Naive thymus-derived CD4-positive, alpha-beta T cell (primary cell): ENCODE measurements at regions of chr17 and their contacts with region 1.

Region 1: DNA sequence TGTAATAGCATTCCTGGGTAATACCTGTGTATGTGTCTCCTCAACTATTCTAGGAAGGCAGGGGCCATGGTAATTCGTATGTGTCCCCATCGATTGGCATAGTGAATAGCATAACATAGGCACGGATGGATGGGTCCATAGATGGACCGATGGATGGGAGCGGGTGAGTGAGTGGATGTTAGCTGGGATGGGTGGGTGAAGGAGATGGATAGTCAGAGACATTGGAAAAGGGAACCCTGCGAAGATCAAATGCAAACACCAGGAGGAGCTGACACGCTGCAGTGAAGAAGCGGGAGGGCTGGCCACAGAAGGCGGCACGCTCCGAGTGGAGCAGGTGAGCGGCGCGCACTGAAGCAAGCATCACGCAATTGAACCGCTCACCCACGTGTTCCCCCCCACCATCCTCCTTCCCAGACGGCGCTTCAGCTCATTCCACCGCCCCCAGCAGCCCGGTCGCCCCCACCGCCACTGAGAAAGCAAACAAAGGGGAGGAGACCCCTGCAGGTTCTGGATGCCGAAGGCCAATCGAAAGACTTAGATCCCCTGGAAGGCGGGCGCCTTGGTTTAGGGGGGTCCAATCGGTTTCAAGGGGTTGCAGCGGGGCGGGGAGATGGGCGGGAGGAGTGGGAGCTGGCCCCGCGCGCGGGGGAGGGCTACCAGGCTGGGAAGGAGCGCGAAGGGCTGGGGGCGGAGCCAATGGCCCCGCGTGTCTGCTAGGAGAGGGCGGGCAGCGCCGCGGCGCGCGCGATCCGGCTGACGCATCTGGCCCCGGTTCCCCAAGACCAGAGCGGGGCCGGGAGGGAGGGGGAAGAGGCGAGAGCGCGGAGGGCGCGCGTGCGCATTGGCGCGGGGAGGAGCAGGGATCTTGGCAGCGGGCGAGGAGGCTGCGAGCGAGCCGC is at the start of gene ARRB2:
- DNase-seq: peak; percentile 97 to 99 (median 99)
- ATAC-seq: peak; percentile 91
- H3K4me3 ChIP-seq: peak within 1 kb of the TSS; percentile 89
- H3K4me3 Mint-ChIP-seq: peak within 1 kb of the TSS; percentile 89 to 99 (median 97)
- H3K27ac ChIP-seq: peak within 1 kb of the TSS; percentile 84
- H3K27ac Mint-ChIP-seq: peak within 1 kb of the TSS; percentile 69 to 98 (median 92)
- H3K4me1 ChIP-seq: peaks cover 28 to 34% of the 10 kb centered on the region in 2 donors
- H3K4me1 Mint-ChIP-seq: peaks cover 21 to 63% (median 49%) of the 10 kb centered on the region in 7 donors
- H3K27me3 ChIP-seq: no peaks in the 10 kb centered on the region
- H3K27me3 Mint-ChIP-seq: no peaks in the 10 kb centered on the region
- total RNA-seq, gene ARRB2: 270 to 601 (median 377) TPM

Region 2: DNA sequence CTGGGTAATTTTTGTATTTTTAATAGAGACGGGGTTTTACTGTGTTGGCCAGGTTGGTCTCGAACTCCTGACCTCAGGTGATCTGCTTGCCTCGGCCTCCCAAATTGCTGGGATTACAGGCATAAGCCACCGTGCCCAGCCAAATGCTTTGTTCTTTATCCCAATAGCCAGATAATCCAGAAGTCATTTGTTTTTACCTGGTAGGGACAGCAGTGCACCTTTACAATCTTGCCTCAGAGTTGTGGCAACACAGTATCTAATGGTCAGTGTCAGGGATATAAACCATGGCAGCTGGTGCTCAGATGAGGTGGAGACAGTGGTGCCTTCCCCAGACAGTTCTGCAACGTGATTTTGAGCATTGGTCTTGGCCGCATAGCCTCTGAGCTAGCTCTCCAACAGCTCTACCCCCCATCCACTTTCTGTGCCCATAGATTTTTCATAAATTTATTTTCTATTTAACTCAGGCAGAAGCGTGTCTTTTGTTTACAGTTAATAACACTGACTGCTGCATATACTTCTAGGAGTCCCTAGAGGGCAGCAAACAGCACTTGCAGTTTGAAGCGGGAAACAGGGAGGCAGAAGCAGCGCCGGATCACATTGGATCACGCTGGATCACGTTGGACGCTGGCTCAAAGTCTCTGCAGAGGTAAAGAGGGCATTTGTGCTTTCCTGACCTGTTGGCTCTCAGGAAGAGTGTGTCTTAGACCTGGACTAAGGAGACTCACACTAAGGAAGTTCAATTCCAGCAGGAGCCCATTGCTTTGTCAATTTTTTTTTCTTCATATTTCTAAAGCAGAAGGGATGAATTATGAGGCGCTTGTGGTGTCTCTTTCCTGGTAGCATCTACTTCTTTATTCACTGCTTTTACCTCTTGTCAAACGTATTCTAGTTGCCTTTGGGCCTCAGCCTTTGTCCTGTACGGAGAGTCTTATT is 144.6 kb before region 1 on chr17:
- CTCF ChIA-PET with region 1: no interaction called
- POLR2A ChIA-PET with region 1: interaction called, 4 read pairs
- intact Hi-C with region 1: loop called (anchors 5 to 10 kb)
- DNase-seq: peak in 8 of 9 donors; percentile 29 to 60 (median 50)
- ATAC-seq: peak; percentile 90
- H3K4me3 ChIP-seq: no peak overlapping the region
- H3K4me3 Mint-ChIP-seq: peak overlapping the region in 9 of 10 donors; percentile 44 to 77 (median 70)
- H3K27ac ChIP-seq: no peak overlapping the region
- H3K27ac Mint-ChIP-seq: peak overlapping the region in 3 of 9 donors; percentile 15 to 41 (median 21)
- H3K4me1 ChIP-seq: peaks cover 7 to 11% of the 10 kb centered on the region in 2 donors
- H3K4me1 Mint-ChIP-seq: peaks cover 15 to 40% (median 33%) of the 10 kb centered on the region in 7 donors
- H3K27me3 ChIP-seq: no peaks in the 10 kb centered on the region
- H3K27me3 Mint-ChIP-seq: peaks cover 0 to 17% (median 0%) of the 10 kb centered on the region in 5 donors

Region 3: DNA sequence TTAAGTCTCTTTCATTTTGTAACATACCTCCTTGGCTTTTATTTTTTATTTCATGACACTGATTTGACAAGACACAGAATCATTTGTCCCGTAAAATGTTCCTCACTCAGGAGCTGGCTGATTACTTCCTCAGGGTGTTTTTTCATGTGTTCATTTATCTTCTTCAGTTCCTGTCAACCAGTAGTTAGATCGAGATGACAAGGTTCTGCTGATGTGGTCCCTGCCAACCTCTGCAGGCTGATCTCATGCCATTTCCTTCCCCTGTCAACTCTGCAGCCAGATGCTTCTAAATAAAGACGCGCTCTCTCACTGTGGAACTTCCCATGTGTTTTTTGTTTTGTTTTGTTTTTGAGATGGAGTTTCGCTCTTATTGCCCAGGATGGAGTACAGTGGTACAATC is 37.8 kb after region 1 on chr17:
- CTCF ChIA-PET with region 1: interaction called, 3 read pairs
- POLR2A ChIA-PET with region 1: interaction called, 3 read pairs
- intact Hi-C with region 1: loop called (anchors 5 kb)
- DNase-seq: peak in 7 of 9 donors; percentile 28 to 67 (median 58)
- ATAC-seq: peak; percentile 95
- H3K4me3 ChIP-seq: no peak overlapping the region
- H3K4me3 Mint-ChIP-seq: peak overlapping the region; percentile 66 to 77 (median 72)
- H3K27ac ChIP-seq: no peak overlapping the region
- H3K27ac Mint-ChIP-seq: peak overlapping the region; percentile 61 to 90 (median 77)
- H3K4me1 ChIP-seq: peaks cover 5 to 7% of the 10 kb centered on the region in 2 donors
- H3K4me1 Mint-ChIP-seq: peaks cover 13 to 26% (median 21%) of the 10 kb centered on the region in 7 donors
- H3K27me3 ChIP-seq: no peaks in the 10 kb centered on the region
- H3K27me3 Mint-ChIP-seq: peaks cover 0 to 40% (median 0%) of the 10 kb centered on the region in 5 donors

Region 4: GRCh38 chr17:4806777-4807604 is 96.9 kb after region 1 on chr17 and contains the start of gene PLD2:
- CTCF ChIA-PET with region 1: no interaction called
- POLR2A ChIA-PET with region 1: interaction called, 13 read pairs
- intact Hi-C with region 1: loop called in 1 of 2 experiments (anchors 1 kb)
- DNase-seq: peak; percentile 71 to 95 (median 80)
- ATAC-seq: peak; percentile 100
- H3K4me3 ChIP-seq: peak within 1 kb of the TSS; percentile 47
- H3K4me3 Mint-ChIP-seq: peak within 1 kb of the TSS; percentile 71 to 88 (median 80)
- H3K27ac ChIP-seq: peak within 1 kb of the TSS; percentile 79
- H3K27ac Mint-ChIP-seq: peak within 1 kb of the TSS in 7 of 9 donors; percentile 48 to 78 (median 62)
- H3K4me1 ChIP-seq: peaks cover 0 to 5% of the 10 kb centered on the region in 2 donors
- H3K4me1 Mint-ChIP-seq: peaks cover 7 to 23% (median 19%) of the 10 kb centered on the region in 7 donors
- H3K27me3 ChIP-seq: no peaks in the 10 kb centered on the region
- H3K27me3 Mint-ChIP-seq: peaks cover 0 to 7% (median 0%) of the 10 kb centered on the region in 5 donors
- total RNA-seq, gene PLD2: 22.9 to 42.7 (median 26.8) TPM

Region 5: DNA sequence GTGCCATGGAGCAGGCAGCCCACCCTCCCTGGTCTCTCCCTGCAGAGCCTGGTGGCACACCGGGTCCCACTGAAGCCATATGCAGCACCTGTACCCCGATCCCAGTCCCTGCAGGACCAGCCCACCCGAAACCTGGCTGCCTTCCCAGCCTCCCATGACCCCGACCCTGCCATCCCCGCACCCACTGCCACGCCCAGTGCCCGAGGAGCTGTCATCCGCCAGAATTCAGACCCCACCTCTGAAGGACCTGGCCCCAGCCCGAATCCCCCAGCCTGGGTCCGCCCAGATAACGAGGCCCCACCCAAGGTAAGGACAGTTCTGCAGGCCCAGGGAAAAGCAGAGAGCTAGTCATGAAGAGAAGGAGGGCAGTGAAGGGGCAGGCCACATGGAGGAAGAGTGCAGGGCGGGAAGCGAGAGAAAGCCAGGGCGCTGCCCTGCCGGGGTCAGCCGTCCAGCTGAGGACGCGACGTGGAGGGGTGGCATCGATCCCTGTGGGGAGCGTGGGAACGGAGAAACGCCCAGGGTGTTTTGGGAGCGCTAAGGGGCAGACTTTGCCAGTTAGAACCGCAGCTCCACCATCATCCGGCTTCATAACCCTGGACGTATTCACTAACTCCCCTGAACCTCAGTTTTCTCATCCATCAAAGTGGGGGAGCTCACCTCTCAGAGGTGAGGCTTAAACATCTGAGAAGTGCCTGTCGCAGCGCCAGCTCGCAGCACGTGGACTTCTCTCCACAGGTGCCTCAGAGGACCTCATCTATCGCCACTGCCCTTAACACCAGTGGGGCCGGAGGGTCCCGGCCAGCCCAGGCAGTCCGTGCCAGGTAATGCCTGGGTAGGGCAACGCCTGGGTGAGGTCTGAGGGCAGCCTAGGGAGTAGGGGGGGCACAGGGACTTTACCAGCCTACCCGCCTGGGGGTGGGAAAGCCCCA is 181.6 kb after region 1 on chr17:
- CTCF ChIA-PET with region 1: interaction called, 6 read pairs
- POLR2A ChIA-PET with region 1: no interaction called
- intact Hi-C with region 1: loop called (anchors 1 kb)
- DNase-seq: no peak
- ATAC-seq: no peak
- H3K4me3 ChIP-seq: no peak overlapping the region
- H3K4me3 Mint-ChIP-seq: no peak overlapping the region
- H3K27ac ChIP-seq: no peak overlapping the region
- H3K27ac Mint-ChIP-seq: no peak overlapping the region
- H3K4me1 ChIP-seq: no peaks in the 10 kb centered on the region
- H3K4me1 Mint-ChIP-seq: peaks cover 0 to 5% (median 2%) of the 10 kb centered on the region in 7 donors
- H3K27me3 ChIP-seq: no peaks in the 10 kb centered on the region
- H3K27me3 Mint-ChIP-seq: no peaks in the 10 kb centered on the region

Region 6: GRCh38 chr17:4948931-4949320 is 238.9 kb after region 1 on chr17:
- CTCF ChIA-PET with region 1: no interaction called
- POLR2A ChIA-PET with region 1: interaction called, 6 read pairs
- intact Hi-C with region 1: loop called (anchors 1 kb)
- DNase-seq: peak in 7 of 9 donors; percentile 69 to 84 (median 79)
- ATAC-seq: peak; percentile 58
- H3K4me3 ChIP-seq: peak overlapping the region; percentile 98
- H3K4me3 Mint-ChIP-seq: peak overlapping the region; percentile 92 to 100 (median 98)
- H3K27ac ChIP-seq: peak overlapping the region; percentile 89
- H3K27ac Mint-ChIP-seq: peak overlapping the region; percentile 83 to 100 (median 96)
- H3K4me1 ChIP-seq: peaks cover 27 to 35% of the 10 kb centered on the region in 2 donors
- H3K4me1 Mint-ChIP-seq: peaks cover 37 to 50% (median 43%) of the 10 kb centered on the region in 7 donors
- H3K27me3 ChIP-seq: no peaks in the 10 kb centered on the region
- H3K27me3 Mint-ChIP-seq: peaks cover 0 to 2% (median 0%) of the 10 kb centered on the region in 5 donors

Region 7: DNA sequence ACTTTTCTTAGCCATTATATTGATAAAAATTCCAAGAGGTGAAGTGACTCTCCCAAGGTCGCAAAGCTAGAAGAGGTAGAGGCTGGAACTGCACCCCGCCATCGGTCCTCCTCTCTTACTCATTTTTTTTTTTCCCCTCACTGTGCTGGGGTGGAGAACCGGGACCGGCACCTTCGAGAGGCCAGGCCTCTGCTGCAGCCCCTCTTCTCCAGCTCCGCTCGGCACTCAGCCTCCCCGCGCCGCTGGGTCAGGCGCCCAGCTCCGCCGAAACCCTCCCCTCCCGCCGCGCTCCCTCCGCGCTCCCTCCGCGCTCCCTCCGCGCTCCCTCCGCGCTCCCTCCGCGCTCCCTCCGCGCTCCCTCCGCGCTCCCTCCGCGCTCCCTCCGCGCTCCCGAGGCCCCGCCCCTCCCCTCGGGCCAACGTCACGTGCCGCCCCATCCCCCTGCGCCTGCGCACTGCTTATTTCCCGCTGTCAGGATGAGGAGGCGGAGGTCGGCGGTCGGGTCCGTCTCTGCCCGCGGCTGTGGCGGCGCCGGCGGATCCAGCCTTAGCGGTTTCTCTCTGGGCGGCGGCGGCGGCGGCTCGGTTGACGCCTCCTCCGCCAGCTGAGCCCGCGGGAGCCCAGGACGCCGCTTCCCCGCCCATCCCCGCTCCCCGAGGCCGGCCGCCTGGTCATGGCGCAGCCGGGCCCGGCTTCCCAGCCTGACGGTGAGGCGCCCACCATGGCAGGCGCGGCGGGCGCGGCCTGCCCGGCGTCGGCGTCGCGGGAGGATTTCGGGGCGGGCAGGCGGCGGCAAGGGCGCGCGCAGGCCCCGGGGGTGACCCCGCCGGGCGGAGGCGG is 572.0 kb after region 1 on chr17 and contains the start of gene RABEP1:
- CTCF ChIA-PET with region 1: no interaction called
- POLR2A ChIA-PET with region 1: no interaction called
- intact Hi-C with region 1: loop called in 1 of 2 experiments (anchors 1 kb)
- DNase-seq: peak; percentile 88 to 98 (median 92)
- ATAC-seq: peak; percentile 94
- H3K4me3 ChIP-seq: peak within 1 kb of the TSS; percentile 54
- H3K4me3 Mint-ChIP-seq: peak within 1 kb of the TSS; percentile 72 to 95 (median 88)
- H3K27ac ChIP-seq: peak within 1 kb of the TSS; percentile 86
- H3K27ac Mint-ChIP-seq: peak within 1 kb of the TSS; percentile 64 to 93 (median 88)
- H3K4me1 ChIP-seq: peaks cover 16 to 25% of the 10 kb centered on the region in 2 donors
- H3K4me1 Mint-ChIP-seq: peaks cover 24 to 47% (median 37%) of the 10 kb centered on the region in 7 donors
- H3K27me3 ChIP-seq: no peaks in the 10 kb centered on the region
- H3K27me3 Mint-ChIP-seq: no peaks in the 10 kb centered on the region
- total RNA-seq, gene RABEP1: 37.3 to 58.5 (median 44.6) TPM

Region 8: GRCh38 chr17:5422505-5422904 is 712.5 kb after region 1 on chr17:
- CTCF ChIA-PET with region 1: no interaction called
- POLR2A ChIA-PET with region 1: no interaction called
- intact Hi-C with region 1: no loop called
- DNase-seq: no peak
- ATAC-seq: no peak
- H3K4me3 ChIP-seq: no peak overlapping the region
- H3K4me3 Mint-ChIP-seq: peak overlapping the region in 3 of 10 donors; percentile 7 to 63 (median 9)
- H3K27ac ChIP-seq: no peak overlapping the region
- H3K27ac Mint-ChIP-seq: peak overlapping the region in 1 of 9 donors; percentile 43
- H3K4me1 ChIP-seq: peaks cover 13 to 14% of the 10 kb centered on the region in 2 donors
- H3K4me1 Mint-ChIP-seq: peaks cover 16 to 49% (median 38%) of the 10 kb centered on the region in 7 donors
- H3K27me3 ChIP-seq: no peaks in the 10 kb centered on the region
- H3K27me3 Mint-ChIP-seq: peaks cover 0 to 2% (median 0%) of the 10 kb centered on the region in 5 donors